H1 (cell line): ENCODE measurements at regions of chr17 and their contacts with region 1.

Region 1: GRCh38 chr17:45197555-45198334 is 23.9 kb upstream of the FMNL1 start:
- DNase-seq: peak; percentile 90 to 100
- H3K4me3 ChIP-seq: peak overlapping the region in 1 of 4 experiments; percentile 35; a peak in 2 of 8 replicates
- H3K27ac ChIP-seq: no peak overlapping the region
- H3K4me1 ChIP-seq: peaks cover 2 to 9% (median 7%) of the 10 kb centered on the region in 4 experiments; a peak in 5 of 7 replicates
- H3K27me3 ChIP-seq: no peaks in the 10 kb centered on the region
- CTCF ChIP-seq: peak; percentile 97 to 99 (median 99)
- EP300 ChIP-seq: peak in 1 of 2 experiments; percentile 55; a peak in 1 of 3 replicates
- POLR2A ChIP-seq: 0 out of 3 replicates have a peak, but pooled peaks of 1 of the 2 experiments have one; percentile 48
- RAD21 ChIP-seq: peak; percentile 93 to 100

Region 2: GRCh38 chr17:45155029-45155428 is 42.7 kb before region 1 on chr17:
- CTCF ChIA-PET with region 1: interaction called, 187 read pairs
- POLR2A ChIA-PET with region 1: interaction called, 199 read pairs
- DNase-seq: no peak
- H3K4me3 ChIP-seq: no peak overlapping the region
- H3K27ac ChIP-seq: no peak overlapping the region
- H3K4me1 ChIP-seq: peaks cover 0 to 2% (median 0%) of the 10 kb centered on the region in 4 experiments; a peak in 2 of 7 replicates
- H3K27me3 ChIP-seq: no peaks in the 10 kb centered on the region
- CTCF ChIP-seq: no peak
- EP300 ChIP-seq: no peak
- POLR2A ChIP-seq: no peak
- RAD21 ChIP-seq: no peak

Region 3: GRCh38 chr17:45161019-45161825 is 36.5 kb before region 1 on chr17:
- CTCF ChIA-PET with region 1: interaction called, 26 read pairs
- POLR2A ChIA-PET with region 1: interaction called, 30 read pairs
- DNase-seq: peak; percentile 99
- H3K4me3 ChIP-seq: peak overlapping the region; percentile 73 to 97 (median 88)
- H3K27ac ChIP-seq: peak overlapping the region; percentile 99
- H3K4me1 ChIP-seq: peaks cover 0 to 9% (median 3%) of the 10 kb centered on the region in 4 experiments; a peak in 3 of 7 replicates
- H3K27me3 ChIP-seq: no peaks in the 10 kb centered on the region
- CTCF ChIP-seq: peak in 1 of 3 experiments; percentile 52; a peak in 1 of 4 replicates
- EP300 ChIP-seq: 0 out of 3 replicates have a peak, but pooled peaks of 1 of the 2 experiments have one; percentile 21
- POLR2A ChIP-seq: peak; percentile 98 to 100
- RAD21 ChIP-seq: peak in 1 of 2 experiments; percentile 24; a peak in 1 of 4 replicates

Region 4: GRCh38 chr17:45172454-45173286 is 25.1 kb before region 1 on chr17:
- CTCF ChIA-PET with region 1: interaction called, 54 read pairs
- POLR2A ChIA-PET with region 1: interaction called, 37 read pairs
- DNase-seq: peak in 1 of 2 experiments; percentile 70
- H3K4me3 ChIP-seq: peak overlapping the region in 3 of 4 experiments; percentile 4 to 28 (median 10); a peak in 3 of 8 replicates
- H3K27ac ChIP-seq: peak overlapping the region; percentile 64
- H3K4me1 ChIP-seq: peaks cover 5 to 29% (median 26%) of the 10 kb centered on the region in 4 experiments
- H3K27me3 ChIP-seq: no peaks in the 10 kb centered on the region
- CTCF ChIP-seq: peak in 1 of 3 experiments; percentile 20; a peak in 1 of 4 replicates
- EP300 ChIP-seq: no peak
- POLR2A ChIP-seq: no peak
- RAD21 ChIP-seq: no peak

Region 5: DNA sequence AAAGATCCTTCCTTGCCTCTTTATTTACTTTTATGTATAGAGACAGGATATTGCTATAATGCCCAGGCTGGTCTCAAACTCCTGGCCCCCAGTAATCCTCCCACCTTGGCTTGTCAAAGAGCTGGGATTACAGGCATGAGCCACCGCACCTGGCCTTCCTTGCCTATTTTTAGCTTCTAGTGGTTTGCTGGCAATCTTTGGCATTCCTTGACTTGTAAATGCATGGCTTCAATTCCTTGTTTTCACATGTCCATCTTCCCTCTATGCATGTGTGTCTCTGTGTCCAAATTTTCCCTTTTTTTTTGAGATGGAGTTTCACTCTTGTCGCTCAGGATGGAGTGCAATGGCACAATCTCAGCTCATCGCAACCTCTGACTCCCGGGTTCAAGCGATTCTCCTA is 13.6 kb before region 1 on chr17:
- CTCF ChIA-PET with region 1: interaction called, 20 read pairs
- POLR2A ChIA-PET with region 1: interaction called, 7 read pairs
- DNase-seq: no peak
- H3K4me3 ChIP-seq: no peak overlapping the region
- H3K27ac ChIP-seq: no peak overlapping the region
- H3K4me1 ChIP-seq: peaks cover 0 to 3% (median 0%) of the 10 kb centered on the region in 4 experiments; a peak in 2 of 7 replicates
- H3K27me3 ChIP-seq: no peaks in the 10 kb centered on the region
- CTCF ChIP-seq: no peak
- EP300 ChIP-seq: no peak
- POLR2A ChIP-seq: no peak
- RAD21 ChIP-seq: no peak

Region 6: GRCh38 chr17:45235416-45236281 is 37.9 kb after region 1 on chr17:
- CTCF ChIA-PET with region 1: interaction called, 11 read pairs
- POLR2A ChIA-PET with region 1: no interaction called
- DNase-seq: peak; percentile 80 to 92
- H3K4me3 ChIP-seq: 0 out of 8 replicates have a peak overlapping the region, but pooled peaks of 1 of the 4 experiments have one; percentile 12
- H3K27ac ChIP-seq: no peak overlapping the region
- H3K4me1 ChIP-seq: peaks cover 3 to 20% (median 10%) of the 10 kb centered on the region in 4 experiments
- H3K27me3 ChIP-seq: peaks cover 0 to 26% (median 12%) of the 10 kb centered on the region in 4 experiments; a peak in 6 of 7 replicates
- CTCF ChIP-seq: peak; percentile 81 to 95 (median 82)
- EP300 ChIP-seq: no peak
- POLR2A ChIP-seq: no peak
- RAD21 ChIP-seq: peak; percentile 47 to 63; a peak in 3 of 4 replicates

Region 7: GRCh38 chr17:45341533-45342158 is 143.9 kb after region 1 on chr17:
- CTCF ChIA-PET with region 1: no interaction called
- POLR2A ChIA-PET with region 1: no interaction called
- DNase-seq: peak in 1 of 2 experiments; percentile 90
- H3K4me3 ChIP-seq: peak overlapping the region in 1 of 4 experiments; percentile 24; a peak in 1 of 8 replicates
- H3K27ac ChIP-seq: no peak overlapping the region
- H3K4me1 ChIP-seq: peaks cover 2 to 8% (median 4%) of the 10 kb centered on the region in 4 experiments; a peak in 6 of 7 replicates
- H3K27me3 ChIP-seq: peaks cover 0 to 3% (median 0%) of the 10 kb centered on the region in 4 experiments; a peak in 1 of 7 replicates
- CTCF ChIP-seq: no peak
- EP300 ChIP-seq: no peak
- POLR2A ChIP-seq: 0 out of 3 replicates have a peak, but pooled peaks of 1 of the 2 experiments have one; percentile 48
- RAD21 ChIP-seq: no peak